Prostate gland (tissue), 2 donors: ENCODE measurements at regions of chr3 and their contacts with region 1.

Region 1: GRCh38 chr3:177359593-177360357 is 162.5 kb upstream of the TBL1XR1 start:
- DNase-seq: peak; percentile 95
- H3K4me3 ChIP-seq: peak overlapping the region; percentile 2 to 29
- H3K27ac ChIP-seq: peak overlapping the region; percentile 75 to 88
- H3K4me1 ChIP-seq: peaks cover 26% of the 10 kb centered on the region
- H3K27me3 ChIP-seq: no peaks in the 10 kb centered on the region
- CTCF ChIP-seq: peak in 1 of 4 experiments; percentile 18
- POLR2A ChIP-seq: peak; percentile 41

Region 2: DNA sequence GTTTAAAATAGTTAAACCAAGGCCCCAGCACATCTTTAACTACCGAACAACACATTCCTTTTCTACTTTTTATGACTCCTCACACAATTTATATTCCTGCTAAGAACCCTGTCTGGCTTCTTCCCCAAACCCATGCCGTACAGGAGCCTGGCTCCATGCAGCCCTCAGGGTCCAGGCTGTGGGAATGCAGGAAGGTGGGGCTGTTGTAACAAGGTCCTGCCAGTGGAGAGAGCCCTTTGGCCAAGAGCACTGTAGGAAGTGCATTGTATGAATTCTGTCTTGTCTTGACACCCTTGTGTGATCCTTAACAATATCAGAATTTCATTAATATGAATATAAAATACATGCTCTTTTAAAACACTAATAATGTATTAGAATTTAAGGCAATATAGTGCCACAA is 726.3 kb before region 1 on chr3:
- intact Hi-C with region 1: no loop called
- DNase-seq: no peak
- H3K4me3 ChIP-seq: no peak overlapping the region
- H3K27ac ChIP-seq: no peak overlapping the region
- H3K4me1 ChIP-seq: no peaks in the 10 kb centered on the region
- H3K27me3 ChIP-seq: no peaks in the 10 kb centered on the region
- CTCF ChIP-seq: no peak
- POLR2A ChIP-seq: no peak

Region 3: GRCh38 chr3:177050501-177051237 is 309.1 kb before region 1 on chr3:
- intact Hi-C with region 1: loop called (anchors 2 kb)
- DNase-seq: no peak
- H3K4me3 ChIP-seq: no peak overlapping the region
- H3K27ac ChIP-seq: no peak overlapping the region
- H3K4me1 ChIP-seq: peaks cover 10% of the 10 kb centered on the region
- H3K27me3 ChIP-seq: no peaks in the 10 kb centered on the region
- CTCF ChIP-seq: peak; percentile 22 to 79 (median 66)
- POLR2A ChIP-seq: no peak

Region 4: GRCh38 chr3:177441813-177442646 is 82.3 kb after region 1 on chr3:
- intact Hi-C with region 1: loop called (anchors 5 kb)
- DNase-seq: no peak
- H3K4me3 ChIP-seq: peak overlapping the region in 1 of 2 donors; percentile 12
- H3K27ac ChIP-seq: peak overlapping the region; percentile 57 to 66
- H3K4me1 ChIP-seq: no peaks in the 10 kb centered on the region
- H3K27me3 ChIP-seq: no peaks in the 10 kb centered on the region
- CTCF ChIP-seq: no peak
- POLR2A ChIP-seq: no peak

Region 5: GRCh38 chr3:177835008-177835407 is 475.2 kb after region 1 on chr3:
- intact Hi-C with region 1: loop called (anchors 10 kb)
- DNase-seq: no peak
- H3K4me3 ChIP-seq: no peak overlapping the region
- H3K27ac ChIP-seq: no peak overlapping the region
- H3K4me1 ChIP-seq: no peaks in the 10 kb centered on the region
- H3K27me3 ChIP-seq: no peaks in the 10 kb centered on the region
- CTCF ChIP-seq: no peak
- POLR2A ChIP-seq: no peak

Region 6: DNA sequence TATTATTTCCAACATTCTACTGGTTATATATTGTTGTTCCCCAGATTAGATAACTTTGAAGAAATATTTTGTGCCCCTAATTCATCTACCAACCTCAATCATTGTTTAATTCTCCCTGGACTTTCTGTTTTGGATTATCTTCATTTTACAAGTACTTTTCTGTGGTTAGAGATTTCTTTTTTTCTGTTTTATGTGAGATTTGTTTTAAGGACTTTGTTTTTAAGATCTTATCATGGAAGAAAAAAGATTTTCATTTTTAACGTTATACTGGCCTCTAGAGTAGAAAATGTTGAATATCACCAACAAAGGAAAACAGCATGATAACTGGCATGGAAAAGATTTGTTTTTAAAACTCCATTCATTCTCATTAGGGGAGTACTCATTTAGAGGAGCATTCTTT is 965.6 kb after region 1 on chr3:
- intact Hi-C with region 1: loop called (anchors 5 kb)
- DNase-seq: no peak
- H3K4me3 ChIP-seq: no peak overlapping the region
- H3K27ac ChIP-seq: peak overlapping the region in 1 of 2 donors; percentile 14
- H3K4me1 ChIP-seq: no peaks in the 10 kb centered on the region
- H3K27me3 ChIP-seq: no peaks in the 10 kb centered on the region
- CTCF ChIP-seq: peak in 3 of 4 experiments; percentile 40 to 69 (median 65)
- POLR2A ChIP-seq: no peak